Activated CD4-positive, alpha-beta T cell treated with anti-CD3 and anti-CD28 coated beads, Interleukin-2, amount 10 ng/mL, durations not matched to agents 7 days and 5 days (primary cell): ENCODE measurements at regions of chrX and their contacts with region 1.

Region 1: DNA sequence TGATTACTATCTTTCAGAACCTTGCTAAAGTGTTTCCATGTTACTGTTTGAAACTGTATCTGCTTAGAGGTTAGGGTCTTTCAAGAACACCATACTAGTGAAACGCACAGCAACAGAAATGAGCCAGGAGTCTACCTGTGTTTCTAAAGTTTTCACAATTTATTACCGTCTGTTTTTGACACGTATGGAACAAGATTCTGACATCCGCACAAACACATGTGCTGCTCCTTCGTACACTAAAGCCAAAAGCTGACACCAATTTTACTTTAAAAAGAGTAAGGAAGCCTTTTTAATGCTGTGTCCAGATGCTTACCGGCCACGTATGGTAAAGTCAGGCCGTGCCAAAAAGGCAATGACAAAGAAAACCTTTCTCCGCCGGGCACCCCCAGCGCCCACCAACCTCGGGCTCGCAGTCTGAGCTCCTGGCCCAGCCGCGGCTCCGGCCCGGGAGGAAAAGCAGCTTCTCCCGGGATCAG is 532 bp downstream of the RPS4X start:
- DNase-seq: no peak
- H3K4me3 Mint-ChIP-seq: peak overlapping the region; percentile 81
- H3K27ac Mint-ChIP-seq: peak overlapping the region; percentile 88
- H3K4me1 Mint-ChIP-seq: peaks cover 51% of the 10 kb centered on the region
- H3K27me3 Mint-ChIP-seq: peaks cover 14% of the 10 kb centered on the region

Region 2: DNA sequence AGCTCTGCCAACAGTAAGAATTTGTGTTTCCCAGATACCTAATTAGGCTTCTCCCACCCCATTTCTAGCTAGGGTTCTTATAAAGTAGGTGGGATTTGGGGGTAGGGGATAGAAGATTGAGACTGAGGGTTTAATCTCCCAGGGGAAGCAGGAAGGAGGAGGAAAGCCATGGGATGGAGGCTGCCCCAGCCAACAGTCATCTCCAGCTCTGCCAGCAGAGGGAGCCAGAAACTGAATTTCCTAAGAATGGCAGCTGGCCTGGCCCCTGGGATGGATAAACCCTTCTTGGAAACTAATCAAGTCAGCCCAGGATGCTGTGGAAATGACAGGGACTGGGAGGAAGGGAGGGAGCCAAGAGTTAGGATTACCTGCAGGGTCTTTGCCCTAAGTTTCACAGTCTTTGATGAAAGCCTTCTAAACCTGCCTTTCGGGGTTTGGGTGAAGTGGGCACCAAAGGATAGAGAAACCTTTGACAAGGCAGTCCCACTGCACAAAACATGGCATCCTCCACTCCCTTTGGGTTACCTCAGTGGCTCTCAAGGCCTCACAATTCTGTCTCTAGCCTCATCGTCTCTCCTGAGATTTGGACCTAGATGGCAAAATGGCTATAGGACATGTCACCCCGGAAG is 30.9 kb before region 1 on chrX:
- CTCF ChIA-PET with region 1: interaction called, 22 read pairs
- POLR2A ChIA-PET with region 1: interaction called, 5 read pairs
- DNase-seq: peak; percentile 43
- H3K4me3 Mint-ChIP-seq: no peak overlapping the region
- H3K27ac Mint-ChIP-seq: no peak overlapping the region
- H3K4me1 Mint-ChIP-seq: peaks cover 2% of the 10 kb centered on the region
- H3K27me3 Mint-ChIP-seq: no peaks in the 10 kb centered on the region

Region 3: GRCh38 chrX:72297953-72298730 is 21.6 kb after region 1 on chrX:
- CTCF ChIA-PET with region 1: interaction called, 11 read pairs
- POLR2A ChIA-PET with region 1: no interaction called
- DNase-seq: no peak
- H3K4me3 Mint-ChIP-seq: no peak overlapping the region
- H3K27ac Mint-ChIP-seq: no peak overlapping the region
- H3K4me1 Mint-ChIP-seq: no peaks in the 10 kb centered on the region
- H3K27me3 Mint-ChIP-seq: peaks cover 47% of the 10 kb centered on the region

Region 4: GRCh38 chrX:72394518-72395170 is 118.1 kb after region 1 on chrX:
- CTCF ChIA-PET with region 1: no interaction called
- POLR2A ChIA-PET with region 1: no interaction called
- DNase-seq: no peak
- H3K4me3 Mint-ChIP-seq: no peak overlapping the region
- H3K27ac Mint-ChIP-seq: no peak overlapping the region
- H3K4me1 Mint-ChIP-seq: no peaks in the 10 kb centered on the region
- H3K27me3 Mint-ChIP-seq: no peaks in the 10 kb centered on the region